Sigmoid colon (tissue), 7 donors: ENCODE measurements at regions of chr5 and their contacts with region 1.

Region 1: DNA sequence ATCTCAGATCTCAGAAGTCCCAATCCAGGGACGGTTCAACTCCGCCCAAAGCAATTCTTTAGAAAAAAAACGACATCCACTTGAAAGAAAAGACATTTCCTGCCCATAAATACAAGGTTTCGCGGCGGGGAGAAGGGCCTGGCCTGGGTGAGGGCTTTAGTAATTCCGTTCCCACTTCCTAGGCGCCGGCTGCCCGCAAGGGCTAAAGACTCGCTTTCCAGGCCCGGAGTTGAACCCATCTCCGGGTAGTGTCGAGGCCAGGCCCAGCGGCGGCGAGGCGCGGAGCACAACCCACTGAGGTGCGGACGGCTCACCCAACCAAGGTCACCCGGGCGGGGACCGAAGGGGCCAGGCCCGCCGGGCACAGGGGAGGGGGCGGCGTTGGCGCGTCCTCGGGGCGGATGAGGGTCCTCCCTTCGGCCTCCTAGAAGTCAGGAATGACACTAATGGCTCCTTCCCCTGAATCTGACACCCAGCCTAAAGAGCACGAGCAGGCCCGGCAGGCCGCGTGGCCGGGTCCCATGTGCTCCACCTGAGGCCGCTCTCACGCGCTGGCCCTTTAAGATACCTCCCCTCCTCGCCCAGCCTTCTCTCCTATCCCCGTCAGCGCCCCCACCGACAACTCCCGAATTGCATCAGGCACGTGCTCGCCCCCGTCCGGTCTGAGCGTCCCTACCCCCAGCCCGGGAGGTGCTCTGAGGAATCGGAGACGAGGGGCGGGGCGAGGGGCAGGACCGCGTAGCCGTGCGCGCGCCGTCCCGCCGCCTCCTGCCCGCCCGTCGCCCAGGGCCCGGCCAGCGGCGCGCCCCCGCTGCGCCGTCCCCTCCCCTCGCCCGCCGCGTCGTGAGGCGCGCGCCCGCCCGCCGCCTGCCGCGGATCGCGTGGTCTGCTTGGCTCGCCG is 467 bp upstream of the LARP1 start:
- DNase-seq: peak; percentile 100
- H3K4me3 ChIP-seq: peak overlapping the region; percentile 88 to 99 (median 96)
- H3K27ac ChIP-seq: peak overlapping the region; percentile 99 to 100 (median 100)
- H3K4me1 ChIP-seq: peaks cover 0 to 45% (median 42%) of the 10 kb centered on the region in 4 donors
- H3K27me3 ChIP-seq: no peaks in the 10 kb centered on the region
- CTCF ChIP-seq: peak in 2 of 4 experiments; percentile 2 to 17
- EP300 ChIP-seq: peak in 2 of 4 donors; percentile 35 to 92
- POLR2A ChIP-seq: peak; percentile 40 to 43

Region 2: GRCh38 chr5:154445422-154446182 is 309.1 kb before region 1 on chr5 and contains the start of gene SAP30L:
- intact Hi-C with region 1: loop called (anchors 10 kb)
- DNase-seq: peak; percentile 97
- H3K4me3 ChIP-seq: peak within 1 kb of the TSS; percentile 77 to 94 (median 84)
- H3K27ac ChIP-seq: peak within 1 kb of the TSS; percentile 90 to 93 (median 92)
- H3K4me1 ChIP-seq: peaks cover 0 to 41% (median 33%) of the 10 kb centered on the region in 4 donors
- H3K27me3 ChIP-seq: no peaks in the 10 kb centered on the region
- CTCF ChIP-seq: no peak
- EP300 ChIP-seq: no peak
- POLR2A ChIP-seq: peak; percentile 81
- total RNA-seq, gene SAP30L: 36.0 to 51.7 (median 42.9) TPM

Region 3: GRCh38 chr5:154478224-154478565 is 276.5 kb before region 1 on chr5 and contains the start of gene HAND1:
- intact Hi-C with region 1: loop called (anchors 2 kb)
- DNase-seq: peak; percentile 98
- H3K4me3 ChIP-seq: peak within 1 kb of the TSS; percentile 70 to 77 (median 72)
- H3K27ac ChIP-seq: peak within 1 kb of the TSS in 3 of 4 donors; percentile 91 to 96 (median 94)
- H3K4me1 ChIP-seq: peaks cover 0 to 73% (median 67%) of the 10 kb centered on the region in 4 donors
- H3K27me3 ChIP-seq: peaks cover 0 to 67% (median 9%) of the 10 kb centered on the region in 3 donors
- CTCF ChIP-seq: peak in 1 of 4 experiments; percentile 10
- EP300 ChIP-seq: peak in 1 of 4 donors; percentile 20
- POLR2A ChIP-seq: no peak
- total RNA-seq, gene HAND1: 45.6 to 69.2 (median 48.9) TPM

Region 4: DNA sequence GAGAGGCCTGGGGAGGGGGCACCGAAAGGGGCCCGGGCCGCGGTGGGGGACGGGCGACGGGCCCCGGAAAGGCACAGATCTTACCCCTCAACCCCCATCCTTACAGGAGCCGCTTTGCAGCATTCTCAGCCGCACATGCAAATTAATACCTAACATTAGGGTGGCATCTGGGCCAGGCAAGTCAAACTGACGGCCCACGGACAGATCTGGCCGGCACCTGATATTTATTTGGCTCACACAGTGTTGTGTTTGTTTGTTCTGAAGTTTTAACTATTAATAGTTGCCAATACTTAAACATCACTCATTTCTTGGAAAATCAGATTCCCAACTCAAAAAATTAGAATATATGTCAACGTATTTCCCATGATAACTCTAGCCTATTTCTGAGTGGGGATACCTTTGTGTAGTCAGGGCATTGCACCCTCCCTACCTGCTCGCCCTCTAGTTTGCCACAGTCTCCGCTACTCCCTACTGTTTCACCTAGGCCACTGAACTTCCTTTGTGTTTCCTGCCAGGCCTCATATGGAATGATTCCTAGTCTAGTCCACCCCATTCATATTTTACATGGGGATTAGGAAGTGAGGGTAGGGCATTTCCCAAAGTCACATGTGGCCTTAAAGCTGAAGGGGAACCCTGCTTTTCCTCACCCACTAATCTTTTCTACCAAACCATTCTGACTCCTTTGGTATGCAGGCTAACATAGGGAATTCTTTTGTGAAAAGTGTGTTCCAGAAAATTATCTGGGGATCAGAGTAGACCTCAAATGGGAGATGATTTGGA is 71.4 kb before region 1 on chr5:
- intact Hi-C with region 1: loop called (anchors 1 kb)
- DNase-seq: no peak
- H3K4me3 ChIP-seq: peak overlapping the region; percentile 15 to 55 (median 52)
- H3K27ac ChIP-seq: peak overlapping the region; percentile 76 to 86 (median 82)
- H3K4me1 ChIP-seq: peaks cover 0 to 25% (median 16%) of the 10 kb centered on the region in 4 donors
- H3K27me3 ChIP-seq: no peaks in the 10 kb centered on the region
- CTCF ChIP-seq: no peak
- EP300 ChIP-seq: no peak
- POLR2A ChIP-seq: no peak

Region 5: DNA sequence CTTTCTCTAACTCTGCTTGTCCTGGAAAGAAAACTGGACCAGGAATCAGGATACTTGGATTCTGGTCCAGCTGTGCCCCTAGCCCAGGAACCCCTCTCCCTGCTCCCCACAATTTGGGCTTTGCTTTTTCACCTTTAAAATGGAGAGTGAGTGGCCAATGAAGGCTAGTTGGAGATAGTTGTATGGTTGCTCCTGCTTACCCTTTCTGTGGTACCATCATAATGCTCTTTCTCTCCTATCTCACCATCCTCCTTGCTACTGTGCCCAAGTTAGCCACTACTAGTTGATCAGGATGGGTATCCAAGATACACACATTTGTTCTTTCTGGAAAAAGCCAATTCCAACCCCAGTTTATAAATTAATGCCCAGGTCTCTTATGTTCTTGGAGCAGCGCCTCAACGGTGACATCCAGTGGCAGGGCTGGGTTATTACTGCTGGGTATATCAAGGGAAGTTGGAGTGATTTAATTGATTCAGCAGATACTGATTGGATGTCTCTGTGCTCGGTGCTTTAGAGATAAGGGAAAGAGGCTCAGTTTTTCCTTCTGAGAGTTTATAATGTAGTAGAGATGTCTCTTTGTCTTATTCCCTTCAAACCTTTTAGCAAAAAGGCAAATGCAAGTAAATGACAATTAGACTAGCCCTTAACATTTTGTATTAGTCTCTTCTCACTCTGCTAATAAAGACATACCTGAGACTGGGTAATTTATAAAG is 57.1 kb after region 1 on chr5:
- intact Hi-C with region 1: loop called (anchors 5 kb)
- DNase-seq: peak; percentile 78
- H3K4me3 ChIP-seq: no peak overlapping the region
- H3K27ac ChIP-seq: no peak overlapping the region
- H3K4me1 ChIP-seq: peaks cover 0 to 8% (median 5%) of the 10 kb centered on the region in 4 donors
- H3K27me3 ChIP-seq: no peaks in the 10 kb centered on the region
- CTCF ChIP-seq: peak; percentile 73 to 91 (median 87)
- EP300 ChIP-seq: no peak
- POLR2A ChIP-seq: no peak